HEK293T (cell line): ENCODE measurements at regions of chrX and their contacts with region 1.

Region 1: DNA sequence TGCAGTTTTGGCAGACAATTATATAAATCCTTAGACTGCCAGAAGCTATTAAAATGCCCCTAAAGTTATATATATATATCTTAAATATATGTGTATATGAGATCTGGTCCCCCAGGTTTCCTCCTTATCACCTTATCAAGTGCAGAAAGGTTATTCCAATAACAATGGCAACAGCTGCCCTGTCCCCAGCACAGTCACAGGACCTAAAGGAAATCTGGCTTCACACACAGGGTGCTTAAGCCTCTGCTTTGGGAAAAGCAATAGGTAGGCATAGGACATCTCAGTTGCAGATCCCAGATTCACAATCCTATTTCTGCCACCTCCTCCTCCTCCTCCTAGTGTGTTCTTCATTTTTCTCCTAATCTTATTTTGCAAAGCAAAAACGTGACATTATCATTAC is 5.8 kb downstream of the SLC25A53 start:
- DNase-seq: no peak

Region 2: DNA sequence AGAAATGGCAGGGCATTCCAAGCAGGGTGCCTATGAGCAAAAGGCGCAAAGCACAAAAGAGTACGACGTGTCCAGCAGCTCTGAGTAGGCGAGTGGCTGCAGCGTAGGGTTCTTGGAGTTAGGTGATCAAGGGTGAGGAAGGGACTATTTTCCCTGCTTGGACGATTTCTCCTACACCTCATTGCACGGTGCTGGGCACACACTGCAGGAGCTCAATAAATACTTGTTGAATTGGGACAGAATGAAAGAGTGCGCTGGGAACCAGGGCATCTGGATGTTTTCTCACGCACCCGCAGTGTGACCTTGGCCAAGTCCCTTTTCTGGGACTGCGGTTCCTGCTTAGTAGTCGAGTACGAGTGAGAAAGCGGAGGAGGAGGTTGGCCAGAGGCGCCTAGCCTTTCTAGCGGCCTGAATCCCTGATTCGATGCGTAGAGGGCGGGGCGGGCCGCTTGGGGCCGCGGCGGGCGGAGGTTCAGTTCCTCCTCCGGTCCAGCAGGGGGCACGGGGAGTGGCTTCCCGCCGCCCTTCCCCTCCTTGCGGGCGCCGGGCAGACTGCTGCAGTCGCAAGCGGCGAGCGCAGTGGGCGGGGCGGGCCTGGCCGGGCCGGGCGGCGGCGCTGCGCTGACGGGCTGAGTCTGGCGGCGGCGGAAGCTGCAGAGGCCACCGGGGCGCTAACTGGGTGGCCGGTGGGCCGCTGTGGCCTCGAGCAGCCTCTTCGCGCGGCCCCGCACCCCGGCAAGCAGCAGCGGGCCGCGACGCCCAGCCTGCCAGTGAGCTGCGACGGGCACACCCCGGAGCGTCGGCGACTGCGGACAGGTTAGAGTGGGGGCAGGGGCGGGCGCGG is 15.1 kb after region 1 on chrX and contains the start of gene FAM199X:
- CTCF ChIA-PET with region 1: interaction called, 11 read pairs
- POLR2A ChIA-PET with region 1: interaction called, 70 read pairs
- DNase-seq: peak; percentile 97